ENCODE measurements at regions of chr11 and their contacts with region 1.

Region 1: DNA sequence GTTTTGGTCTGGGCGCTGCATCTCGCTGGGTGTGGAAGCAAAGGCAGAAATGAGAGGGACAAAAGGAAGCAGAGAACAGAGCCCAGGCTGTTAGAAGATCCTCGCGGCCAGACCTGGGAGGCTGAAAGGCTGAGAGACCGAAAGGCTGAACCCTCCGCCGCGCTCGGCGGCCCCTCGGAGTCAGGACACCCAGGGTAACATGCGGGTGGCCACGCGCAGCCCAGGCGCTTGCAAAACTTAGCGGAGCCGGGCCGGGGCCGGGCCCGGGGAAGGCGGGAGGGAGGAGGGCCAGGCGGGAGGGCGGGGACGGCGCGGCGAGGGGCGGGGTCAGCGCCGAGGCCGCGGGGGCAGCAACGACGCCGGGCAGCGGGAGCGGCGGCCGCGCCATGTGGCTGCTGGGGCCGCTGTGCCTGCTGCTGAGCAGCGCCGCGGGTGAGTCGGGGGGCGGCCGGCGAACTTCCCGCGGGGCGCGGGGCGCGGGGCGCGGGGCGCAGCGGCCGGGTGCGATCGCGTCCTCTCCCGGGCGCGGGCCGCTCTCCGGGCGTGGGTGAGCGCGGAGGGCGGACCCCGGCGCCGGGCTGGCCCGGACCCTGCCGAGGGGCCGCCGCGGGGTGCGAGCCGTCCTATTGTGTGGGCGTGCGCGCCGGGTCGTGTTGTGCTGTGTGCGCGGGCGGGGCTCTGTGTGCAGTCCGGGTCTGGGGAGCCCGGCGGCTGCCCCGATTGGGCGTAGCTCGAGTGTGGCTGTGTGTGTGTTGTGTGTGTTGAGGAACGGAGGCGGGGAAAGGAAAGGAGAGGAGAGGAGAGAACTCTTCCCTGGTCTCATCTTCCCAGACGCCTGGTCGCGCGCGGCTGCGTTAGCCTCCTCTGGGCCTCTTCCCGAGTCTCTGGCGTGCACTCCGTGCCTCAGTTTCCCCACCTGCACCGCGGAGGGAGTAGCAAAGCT is at the start of gene LDLRAD3:
- DNase-seq: peak; percentile 87 to 91 (median 91)
- ATAC-seq: peak; percentile 93 to 95
- H3K4me3 ChIP-seq: peak within 1 kb of the TSS; percentile 84
- H3K27ac ChIP-seq: no peak within 1 kb of the TSS
- H3K4me1 ChIP-seq: no peaks in the 10 kb centered on the region
- H3K27me3 ChIP-seq: no peaks in the 10 kb centered on the region
- total RNA-seq, gene LDLRAD3: 3.0 to 7.0 (median 3.6) TPM

Region 2: GRCh38 chr11:35845860-35846259 is 98.1 kb before region 1 on chr11:
- intact Hi-C with region 1: no loop called
- DNase-seq: no peak
- ATAC-seq: no peak
- H3K4me3 ChIP-seq: no peak overlapping the region
- H3K27ac ChIP-seq: no peak overlapping the region
- H3K4me1 ChIP-seq: no peaks in the 10 kb centered on the region
- H3K27me3 ChIP-seq: no peaks in the 10 kb centered on the region

Region 3: GRCh38 chr11:36002196-36002595 is 58.2 kb after region 1 on chr11:
- intact Hi-C with region 1: no loop called
- DNase-seq: no peak
- ATAC-seq: peak in 1 of 2 donors; percentile 21
- H3K4me3 ChIP-seq: no peak overlapping the region
- H3K27ac ChIP-seq: no peak overlapping the region
- H3K4me1 ChIP-seq: no peaks in the 10 kb centered on the region
- H3K27me3 ChIP-seq: no peaks in the 10 kb centered on the region

Region 4: GRCh38 chr11:36056160-36056751 is 112.3 kb after region 1 on chr11:
- intact Hi-C with region 1: loop called in 1 of 4 experiments (anchors 10 kb)
- DNase-seq: peak in 1 of 3 donors; percentile 42
- ATAC-seq: peak; percentile 27 to 35
- H3K4me3 ChIP-seq: no peak overlapping the region
- H3K27ac ChIP-seq: no peak overlapping the region
- H3K4me1 ChIP-seq: no peaks in the 10 kb centered on the region
- H3K27me3 ChIP-seq: no peaks in the 10 kb centered on the region